ENCODE measurements at regions of chr1 and their contacts with region 1.

Region 1: GRCh38 chr1:19651141-19651737 is 7.1 kb downstream of the NBL1 start:
- DNase-seq: peak; percentile 84
- H3K4me3 ChIP-seq: peak overlapping the region in 1 of 4 donors; percentile 7
- H3K27ac ChIP-seq: peak overlapping the region; percentile 81 to 97 (median 93)
- H3K4me1 ChIP-seq: peaks cover 0 to 71% (median 62%) of the 10 kb centered on the region in 4 donors
- H3K27me3 ChIP-seq: no peaks in the 10 kb centered on the region
- CTCF ChIP-seq: peak; percentile 50 to 73 (median 56)
- EP300 ChIP-seq: no peak
- POLR2A ChIP-seq: no peak

Region 2: DNA sequence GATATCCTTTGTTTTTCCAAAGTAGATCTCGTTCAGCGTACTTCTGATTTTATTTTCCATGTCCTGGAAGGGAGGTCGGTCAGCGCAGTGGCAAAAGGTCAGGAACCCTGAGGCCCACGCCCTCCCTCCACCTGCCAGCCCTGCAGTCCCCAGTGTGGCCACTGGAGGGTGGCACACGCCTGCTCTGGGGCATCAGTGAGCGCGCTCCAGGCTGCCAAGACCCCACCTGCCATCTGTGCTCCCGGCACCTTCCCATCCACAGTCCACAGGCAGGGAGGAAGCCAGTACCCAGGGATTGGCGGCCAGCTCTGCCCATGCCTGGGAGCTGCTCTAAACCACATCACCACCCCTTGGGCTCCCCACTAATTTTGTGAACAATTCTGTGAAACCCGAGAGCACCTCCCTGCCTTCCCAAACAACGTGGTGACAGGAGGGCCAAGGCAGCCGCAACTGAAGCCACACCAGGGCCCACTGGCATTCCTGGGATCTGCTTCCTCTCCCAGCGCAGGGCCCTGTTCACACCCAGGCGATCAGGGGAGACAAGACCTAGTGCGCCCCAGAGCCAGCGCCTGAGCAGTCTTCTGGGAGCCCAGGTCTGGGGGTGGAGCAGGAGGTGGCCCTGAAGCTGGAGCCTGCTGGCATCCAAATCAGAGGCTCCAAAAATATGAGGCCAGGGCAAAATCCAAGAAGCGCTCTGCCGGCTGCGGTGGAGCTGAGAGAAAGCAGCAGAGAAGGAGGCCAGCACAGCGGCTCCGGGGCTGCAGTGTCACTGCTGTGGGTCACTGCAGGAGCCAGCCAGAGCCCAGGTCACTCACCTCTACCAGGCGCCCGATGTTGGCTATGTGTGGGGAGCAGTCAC is 306.6 kb before region 1 on chr1:
- intact Hi-C with region 1: loop called (anchors 2 kb)
- DNase-seq: peak; percentile 84
- H3K4me3 ChIP-seq: no peak overlapping the region
- H3K27ac ChIP-seq: peak overlapping the region in 1 of 4 donors; percentile 26
- H3K4me1 ChIP-seq: peaks cover 0 to 39% (median 27%) of the 10 kb centered on the region in 4 donors
- H3K27me3 ChIP-seq: no peaks in the 10 kb centered on the region
- CTCF ChIP-seq: peak; percentile 83 to 94 (median 90)
- EP300 ChIP-seq: no peak
- POLR2A ChIP-seq: no peak

Region 3: GRCh38 chr1:19390901-19391595 is 260.2 kb before region 1 on chr1:
- intact Hi-C with region 1: loop called (anchors 2 kb)
- DNase-seq: peak; percentile 87
- H3K4me3 ChIP-seq: peak overlapping the region in 1 of 4 donors; percentile 12
- H3K27ac ChIP-seq: peak overlapping the region; percentile 71 to 98 (median 82)
- H3K4me1 ChIP-seq: peaks cover 0 to 83% (median 76%) of the 10 kb centered on the region in 4 donors
- H3K27me3 ChIP-seq: no peaks in the 10 kb centered on the region
- CTCF ChIP-seq: peak; percentile 70 to 88 (median 84)
- EP300 ChIP-seq: no peak
- POLR2A ChIP-seq: no peak

Region 4: GRCh38 chr1:19448491-19449439 is 202.5 kb before region 1 on chr1:
- intact Hi-C with region 1: no loop called
- DNase-seq: peak; percentile 93
- H3K4me3 ChIP-seq: no peak overlapping the region
- H3K27ac ChIP-seq: peak overlapping the region; percentile 85 to 98 (median 91)
- H3K4me1 ChIP-seq: peaks cover 0 to 100% (median 96%) of the 10 kb centered on the region in 4 donors
- H3K27me3 ChIP-seq: no peaks in the 10 kb centered on the region
- CTCF ChIP-seq: no peak
- EP300 ChIP-seq: peak; percentile 47 to 69 (median 60)
- POLR2A ChIP-seq: no peak